Activated T-helper 2 cell treated with anti-CD3 and anti-CD28 coated beads, Interferon-gamma antibody, Interleukin-2, Interleukin-4, amounts not matched to agents 10 μg/mL and 5 μg/mL and 100 μg/mL, durations not matched to agents 14 hours and 24 hours and 36 hours (primary cell): ENCODE measurements at regions of chr12 and their contacts with region 1.

Region 1: DNA sequence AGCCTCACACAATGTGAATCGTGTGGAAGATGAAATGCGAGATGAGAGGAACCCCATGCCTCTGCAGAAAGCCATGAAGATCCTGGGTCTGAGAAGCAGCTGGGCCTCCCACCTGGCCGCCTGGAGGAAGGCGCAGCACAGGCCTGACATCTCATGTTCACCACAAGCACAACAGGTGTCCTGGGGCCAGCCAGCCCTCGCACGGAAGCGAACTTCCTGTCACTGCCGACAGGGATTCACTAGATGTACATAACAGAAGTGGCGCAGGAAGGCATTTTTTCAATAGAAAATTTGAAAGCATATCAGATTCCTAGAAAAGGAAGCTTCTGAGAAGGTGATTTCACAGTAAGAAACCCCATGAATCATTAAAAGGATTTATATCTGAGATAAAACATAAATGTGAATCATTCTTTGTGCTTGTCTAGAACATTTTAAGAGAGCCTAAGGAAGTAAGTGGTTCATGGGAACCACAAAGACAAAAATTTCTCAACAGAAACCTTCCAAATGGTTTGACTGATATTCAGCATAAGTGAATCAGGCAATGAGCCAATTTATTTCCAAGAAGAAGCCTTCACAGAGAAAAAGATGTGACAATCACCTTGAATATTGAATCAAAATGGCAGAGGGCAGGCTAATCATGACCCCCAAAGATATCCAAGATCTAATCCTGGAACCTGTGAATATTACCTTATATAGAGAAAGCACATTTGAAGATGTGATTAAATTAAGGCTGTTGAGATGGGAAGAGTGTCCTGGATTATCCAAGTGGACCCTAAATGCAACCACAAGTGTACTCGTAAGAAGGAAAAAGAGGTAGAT is 311.9 kb downstream of the DUSP6 start:
- DNase-seq: peak; percentile 83
- H3K4me3 Mint-ChIP-seq: peak overlapping the region; percentile 50
- H3K27ac Mint-ChIP-seq: peak overlapping the region; percentile 94
- H3K4me1 Mint-ChIP-seq: peaks cover 67% of the 10 kb centered on the region
- H3K27me3 Mint-ChIP-seq: no peaks in the 10 kb centered on the region

Region 2: GRCh38 chr12:89019408-89020120 is 20.8 kb before region 1 on chr12:
- intact Hi-C with region 1: loop called (anchors 1 kb)
- DNase-seq: peak; percentile 75
- H3K4me3 Mint-ChIP-seq: no peak overlapping the region
- H3K27ac Mint-ChIP-seq: no peak overlapping the region
- H3K4me1 Mint-ChIP-seq: peaks cover 27% of the 10 kb centered on the region
- H3K27me3 Mint-ChIP-seq: peaks cover 1% of the 10 kb centered on the region

Region 3: DNA sequence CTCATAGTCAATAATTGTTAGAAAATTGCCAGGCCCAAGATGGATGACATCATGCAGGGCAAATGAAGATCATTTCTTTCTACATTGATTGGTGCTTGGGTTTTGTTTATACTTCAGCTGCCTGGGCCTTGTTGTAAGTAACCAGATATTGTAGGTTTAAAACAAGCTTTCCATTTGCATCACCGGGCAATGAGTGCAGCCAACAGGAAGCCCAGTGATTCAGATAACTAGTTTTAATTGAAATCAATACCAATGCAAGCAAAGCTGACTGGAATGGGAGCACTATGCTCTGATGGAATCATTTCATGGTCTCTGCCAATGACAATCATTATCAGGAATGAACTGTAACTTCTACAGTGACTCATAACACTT is 32.7 kb after region 1 on chr12:
- intact Hi-C with region 1: no loop called
- DNase-seq: no peak
- H3K4me3 Mint-ChIP-seq: no peak overlapping the region
- H3K27ac Mint-ChIP-seq: peak overlapping the region; percentile 44
- H3K4me1 Mint-ChIP-seq: peaks cover 29% of the 10 kb centered on the region
- H3K27me3 Mint-ChIP-seq: no peaks in the 10 kb centered on the region

Region 4: GRCh38 chr12:89126712-89127111 is 86.4 kb after region 1 on chr12:
- intact Hi-C with region 1: no loop called
- DNase-seq: no peak
- H3K4me3 Mint-ChIP-seq: no peak overlapping the region
- H3K27ac Mint-ChIP-seq: no peak overlapping the region
- H3K4me1 Mint-ChIP-seq: peaks cover 6% of the 10 kb centered on the region
- H3K27me3 Mint-ChIP-seq: no peaks in the 10 kb centered on the region

Region 5: GRCh38 chr12:89179983-89180382 is 139.6 kb after region 1 on chr12:
- intact Hi-C with region 1: loop called (anchors 1 kb)
- DNase-seq: no peak
- H3K4me3 Mint-ChIP-seq: peak overlapping the region; percentile 50
- H3K27ac Mint-ChIP-seq: peak overlapping the region; percentile 86
- H3K4me1 Mint-ChIP-seq: peaks cover 71% of the 10 kb centered on the region
- H3K27me3 Mint-ChIP-seq: no peaks in the 10 kb centered on the region

Region 6: GRCh38 chr12:89261982-89262381 is 221.6 kb after region 1 on chr12:
- intact Hi-C with region 1: loop called (anchors 1 kb)
- DNase-seq: no peak
- H3K4me3 Mint-ChIP-seq: no peak overlapping the region
- H3K27ac Mint-ChIP-seq: peak overlapping the region; percentile 28
- H3K4me1 Mint-ChIP-seq: peaks cover 52% of the 10 kb centered on the region
- H3K27me3 Mint-ChIP-seq: no peaks in the 10 kb centered on the region

Region 7: DNA sequence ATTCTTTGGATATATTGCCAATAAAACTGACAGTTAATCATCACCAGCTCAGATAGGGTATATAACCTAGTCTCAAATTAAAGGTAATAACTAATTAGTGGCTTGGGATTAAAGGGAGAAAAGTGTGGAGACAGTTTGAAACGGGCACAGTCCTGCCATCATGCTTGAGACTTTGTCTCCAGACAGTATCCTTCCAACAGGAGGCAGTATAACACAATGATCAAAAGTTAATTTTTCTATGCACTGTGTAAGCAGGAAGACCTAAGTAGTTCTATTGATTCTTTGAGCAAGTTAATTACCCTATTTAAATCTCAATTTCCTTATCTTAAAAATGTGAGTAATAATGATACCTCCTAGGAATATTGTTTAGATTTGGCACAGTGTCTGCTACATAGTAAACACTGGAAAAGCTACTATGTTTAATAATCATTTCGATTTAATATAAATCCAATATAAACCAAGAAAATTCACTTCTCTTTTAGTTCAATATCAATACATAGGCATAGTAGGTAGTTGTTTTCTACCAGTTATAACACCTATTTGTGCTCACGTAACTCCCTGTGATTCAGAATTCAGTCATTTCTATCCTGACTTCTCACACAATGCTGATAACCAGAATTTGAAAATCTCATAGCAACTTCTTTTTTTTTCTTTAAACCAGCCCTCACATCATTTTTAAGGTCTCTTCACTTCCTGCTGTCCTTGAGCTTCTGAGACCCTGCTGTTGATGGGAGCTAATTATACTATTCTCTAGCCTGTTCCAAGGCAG is 430.6 kb after region 1 on chr12:
- intact Hi-C with region 1: loop called (anchors 2 kb)
- DNase-seq: no peak
- H3K4me3 Mint-ChIP-seq: no peak overlapping the region
- H3K27ac Mint-ChIP-seq: peak overlapping the region; percentile 63
- H3K4me1 Mint-ChIP-seq: peaks cover 65% of the 10 kb centered on the region
- H3K27me3 Mint-ChIP-seq: no peaks in the 10 kb centered on the region

Region 8: GRCh38 chr12:89756585-89757321 is 716.4 kb after region 1 on chr12:
- intact Hi-C with region 1: loop called (anchors 2 kb)
- DNase-seq: peak; percentile 27
- H3K4me3 Mint-ChIP-seq: no peak overlapping the region
- H3K27ac Mint-ChIP-seq: peak overlapping the region; percentile 56
- H3K4me1 Mint-ChIP-seq: peaks cover 28% of the 10 kb centered on the region
- H3K27me3 Mint-ChIP-seq: peaks cover 2% of the 10 kb centered on the region